GM10248 (cell line): ENCODE measurements at regions of chr3 and their contacts with region 1.

Region 1: DNA sequence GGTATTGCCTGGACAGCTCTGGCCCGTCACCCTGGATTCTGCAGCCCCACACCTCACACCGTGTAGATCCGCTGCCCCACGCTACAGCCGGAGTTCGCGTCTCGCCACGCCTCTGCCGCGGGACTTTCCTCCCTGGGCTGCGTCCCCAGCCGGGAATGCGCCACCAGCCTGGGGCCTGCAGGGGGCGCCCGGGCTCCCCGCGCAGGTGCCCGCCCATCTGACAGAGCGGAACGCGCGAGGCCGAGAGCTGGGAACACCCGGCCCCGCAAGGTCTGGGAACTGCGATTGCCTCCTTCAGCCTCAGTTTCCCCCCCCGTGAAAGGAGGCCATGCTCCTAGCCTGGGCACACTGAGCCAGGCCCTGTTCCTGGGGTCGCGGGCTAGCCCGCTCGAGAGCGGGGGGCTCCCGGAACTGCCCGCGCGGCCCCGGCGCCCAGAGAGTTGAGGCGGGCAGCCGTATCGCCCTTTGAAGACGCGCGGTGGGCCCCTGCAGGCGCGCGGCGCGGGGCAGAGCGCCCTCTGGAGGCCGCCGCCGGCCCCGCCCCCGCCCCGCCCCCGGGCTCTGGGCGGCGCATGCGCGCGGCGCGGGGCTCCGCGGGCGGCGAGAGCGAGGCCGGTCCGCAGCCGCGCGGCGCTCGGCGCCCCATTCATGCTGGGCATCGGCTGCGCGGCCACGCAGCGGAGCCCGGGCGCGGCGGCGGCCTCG is at the start of gene PLXNA1:
- DNase-seq: peak; percentile 91
- CTCF ChIP-seq: peak; percentile 95

Region 2: GRCh38 chr3:126752303-126752842 is 230.2 kb before region 1 on chr3:
- CTCF ChIA-PET with region 1: interaction called, 10 read pairs
- POLR2A ChIA-PET with region 1: no interaction called
- DNase-seq: peak; percentile 82
- CTCF ChIP-seq: peak; percentile 95

Region 3: GRCh38 chr3:126816986-126817777 is 165.4 kb before region 1 on chr3:
- CTCF ChIA-PET with region 1: no interaction called
- POLR2A ChIA-PET with region 1: no interaction called
- DNase-seq: no peak
- CTCF ChIP-seq: no peak

Region 4: GRCh38 chr3:126911162-126912026 is 71.2 kb before region 1 on chr3:
- CTCF ChIA-PET with region 1: interaction called, 17 read pairs
- POLR2A ChIA-PET with region 1: no interaction called
- DNase-seq: peak; percentile 94
- CTCF ChIP-seq: no peak

Region 5: GRCh38 chr3:126971891-126972351 is 10.7 kb before region 1 on chr3:
- CTCF ChIA-PET with region 1: interaction called, 29 read pairs
- POLR2A ChIA-PET with region 1: no interaction called
- DNase-seq: no peak
- CTCF ChIP-seq: no peak